Right lobe of liver (tissue), 6 donors: ENCODE measurements at regions of chr17 and their contacts with region 1.

Region 1: DNA sequence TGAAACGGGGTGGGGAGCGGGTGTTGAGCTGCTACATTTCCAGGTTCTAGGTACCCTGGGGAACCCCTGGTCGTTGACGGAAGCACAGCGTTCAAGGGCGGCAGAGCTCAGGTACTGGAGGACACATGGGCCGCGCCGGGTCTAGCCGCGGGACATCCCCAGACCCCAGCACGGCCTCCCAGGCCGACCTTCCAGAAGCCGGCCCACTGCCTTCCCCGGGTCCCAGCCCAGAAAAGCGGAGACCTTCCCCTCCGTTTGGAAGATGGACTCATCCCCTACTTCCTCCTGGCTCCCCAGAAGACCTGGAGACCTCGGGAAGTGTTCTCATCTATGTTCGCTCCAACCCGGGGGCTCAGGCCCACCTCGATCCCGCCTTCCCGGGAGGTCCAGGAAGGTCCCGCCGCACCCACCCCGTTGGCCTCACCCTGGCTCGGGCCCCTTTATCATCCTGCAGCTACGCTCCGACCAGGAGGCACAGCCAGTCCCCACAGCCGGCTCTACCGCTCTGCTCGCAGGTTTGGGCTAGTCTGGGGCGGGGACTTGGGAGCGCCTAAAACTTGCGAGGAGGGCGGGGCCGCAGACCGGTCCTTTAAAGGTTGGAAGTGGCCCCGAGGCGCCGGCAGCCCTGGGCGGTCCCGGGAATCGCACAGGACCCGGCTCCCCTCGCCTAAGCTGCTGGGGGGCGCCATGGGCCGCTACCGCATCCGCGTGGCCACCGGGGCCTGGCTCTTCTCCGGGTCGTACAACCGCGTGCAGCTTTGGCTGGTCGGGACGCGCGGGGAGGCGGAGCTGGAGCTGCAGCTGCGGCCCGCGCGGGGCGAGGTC is at the start of gene ALOX12:
- DNase-seq: peak in 1 of 3 donors; percentile 45
- ATAC-seq: peak; percentile 65 to 75 (median 72)
- H3K4me3 ChIP-seq: peak within 1 kb of the TSS in 1 of 3 donors; percentile 27
- H3K27ac ChIP-seq: no peak within 1 kb of the TSS
- H3K4me1 ChIP-seq: peaks cover 0 to 9% (median 0%) of the 10 kb centered on the region in 4 donors
- H3K27me3 ChIP-seq: no peaks in the 10 kb centered on the region
- CTCF ChIP-seq: no peak
- POLR2A ChIP-seq: no peak
- total RNA-seq, gene ALOX12: 0.17 to 0.27 TPM in 2 of 6 experiments, not detected in the others

Region 2: DNA sequence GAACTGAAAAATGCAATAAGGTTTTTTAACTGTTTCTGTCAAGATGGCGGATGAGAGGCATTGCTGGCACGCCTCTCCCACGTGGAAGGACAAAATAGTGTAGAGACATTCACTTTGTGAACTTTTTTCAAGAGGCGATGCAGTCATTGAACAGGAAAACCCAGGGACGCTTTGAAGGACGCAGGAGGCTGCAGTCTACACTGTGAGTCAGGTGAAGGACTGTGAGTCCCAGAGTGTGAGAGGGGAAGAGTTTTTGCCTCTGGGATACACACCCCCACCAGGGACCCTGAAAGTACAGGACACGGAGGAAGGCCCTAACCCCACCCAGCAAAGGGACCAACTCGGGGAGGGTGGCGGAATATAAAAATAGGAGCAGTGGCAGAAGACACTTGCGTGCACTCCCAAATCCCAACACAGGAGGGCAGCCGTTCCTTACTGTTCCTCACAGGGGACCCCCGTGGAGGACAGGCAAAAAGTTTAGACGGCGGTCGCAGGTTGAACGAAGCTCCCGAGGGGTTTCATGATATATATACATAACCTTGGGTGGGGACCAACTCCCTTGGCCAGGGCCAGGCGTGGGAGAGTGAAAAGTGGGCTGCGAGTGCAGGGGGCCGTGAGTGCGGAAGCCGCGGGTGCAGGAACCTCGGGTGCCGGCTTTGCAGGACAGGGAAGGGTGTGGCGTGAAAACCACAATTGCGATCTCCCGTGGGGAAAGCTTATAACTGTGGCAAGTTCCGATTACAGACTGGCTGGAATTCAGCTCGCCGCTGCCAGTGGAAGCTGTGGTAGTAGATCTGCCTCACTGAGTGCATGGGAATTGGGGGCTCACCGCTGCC is 81.8 kb before region 1 on chr17:
- intact Hi-C with region 1: loop called (anchors 5 to 10 kb)
- DNase-seq: peak; percentile 65 to 71 (median 68)
- ATAC-seq: peak; percentile 76 to 86 (median 82)
- H3K4me3 ChIP-seq: no peak overlapping the region
- H3K27ac ChIP-seq: no peak overlapping the region
- H3K4me1 ChIP-seq: no peaks in the 10 kb centered on the region
- H3K27me3 ChIP-seq: no peaks in the 10 kb centered on the region
- CTCF ChIP-seq: peak; percentile 65 to 75 (median 66)
- POLR2A ChIP-seq: no peak

Region 3: DNA sequence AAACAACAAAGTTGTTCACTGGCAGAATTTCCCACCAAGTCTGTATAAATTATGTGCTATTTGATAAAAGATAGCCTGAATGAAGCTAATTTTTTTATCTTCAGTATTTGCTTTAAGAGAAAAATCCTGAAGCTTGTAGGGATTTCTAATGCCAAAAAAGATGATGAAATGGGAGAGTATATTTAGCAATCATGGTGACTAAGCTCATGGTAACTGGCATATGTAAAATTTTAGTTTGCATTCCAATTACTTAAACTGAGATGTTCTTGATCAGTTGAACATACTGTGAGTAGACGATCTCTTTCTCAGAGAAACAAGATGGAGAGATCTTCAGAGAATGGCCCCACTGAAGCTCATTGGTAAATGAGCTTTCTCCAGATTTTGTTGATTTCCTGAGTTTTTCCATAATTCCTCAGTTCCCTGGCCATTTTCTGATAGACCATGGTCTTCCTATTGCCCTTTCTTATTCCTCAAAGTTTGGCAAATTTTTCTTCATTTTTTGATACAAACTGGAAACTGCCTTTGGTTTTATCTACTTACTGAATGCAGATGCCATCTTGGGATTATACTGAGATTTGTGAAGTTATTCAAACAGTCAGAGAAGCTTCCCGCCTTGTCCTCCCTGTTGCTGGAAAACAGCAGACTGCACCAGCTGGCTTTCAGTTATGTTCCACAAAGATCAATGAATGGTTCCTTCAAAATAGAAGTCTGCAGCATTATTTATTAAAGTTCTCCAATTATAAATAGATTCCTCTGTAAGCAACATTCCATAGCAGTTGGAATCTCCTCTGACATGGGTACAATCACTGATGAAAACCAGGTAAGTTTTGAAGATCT is 68.1 kb before region 1 on chr17:
- intact Hi-C with region 1: no loop called
- DNase-seq: no peak
- ATAC-seq: peak in 3 of 4 donors; percentile 40 to 71 (median 71)
- H3K4me3 ChIP-seq: no peak overlapping the region
- H3K27ac ChIP-seq: peak overlapping the region in 1 of 3 donors; percentile 20
- H3K4me1 ChIP-seq: peaks cover 0 to 18% (median 6%) of the 10 kb centered on the region in 4 donors
- H3K27me3 ChIP-seq: no peaks in the 10 kb centered on the region
- CTCF ChIP-seq: no peak
- POLR2A ChIP-seq: no peak